OCI-LY7 (cell line): ENCODE measurements at regions of chr6 and their contacts with region 1.

Region 1: GRCh38 chr6:53244958-53245357 is 96.3 kb upstream of the GCM1 start:
- DNase-seq: peak; percentile 94
- H3K4me3 ChIP-seq: peak overlapping the region; percentile 24
- H3K27ac ChIP-seq: peak overlapping the region; percentile 61
- H3K4me1 ChIP-seq: peaks cover 40% of the 10 kb centered on the region
- CTCF ChIP-seq: no peak

Region 2: DNA sequence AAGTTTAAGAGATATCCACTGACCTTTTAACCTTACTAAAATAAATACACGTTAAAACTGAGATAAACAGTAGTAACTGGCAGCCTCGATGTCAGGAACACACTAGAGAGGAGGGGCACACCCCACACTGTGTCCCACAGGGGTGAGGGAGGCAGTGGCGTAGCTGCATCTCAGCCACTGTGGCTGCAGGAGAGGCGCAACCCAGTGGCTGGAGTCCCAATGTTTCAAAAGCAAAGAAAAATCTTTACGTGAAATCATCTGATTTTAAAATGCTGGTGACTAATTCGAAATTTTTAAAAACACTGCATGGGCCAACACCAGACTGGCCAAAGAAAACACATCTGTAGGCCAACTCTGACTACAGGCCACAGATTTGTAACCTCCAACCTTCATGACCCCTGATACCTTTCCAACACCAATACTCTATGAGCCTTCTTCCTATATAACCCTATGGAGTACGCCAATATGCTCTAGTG is 722.8 kb before region 1 on chr6:
- CTCF ChIA-PET with region 1: no interaction called
- POLR2A ChIA-PET with region 1: no interaction called
- intact Hi-C with region 1: no loop called
- DNase-seq: no peak
- H3K4me3 ChIP-seq: no peak overlapping the region
- H3K27ac ChIP-seq: no peak overlapping the region
- H3K4me1 ChIP-seq: peaks cover 31% of the 10 kb centered on the region
- CTCF ChIP-seq: no peak

Region 3: GRCh38 chr6:53189554-53189953 is 55.4 kb before region 1 on chr6:
- CTCF ChIA-PET with region 1: no interaction called
- POLR2A ChIA-PET with region 1: no interaction called
- intact Hi-C with region 1: loop called (anchors 5 kb)
- DNase-seq: no peak
- H3K4me3 ChIP-seq: no peak overlapping the region
- H3K27ac ChIP-seq: no peak overlapping the region
- H3K4me1 ChIP-seq: peaks cover 13% of the 10 kb centered on the region
- CTCF ChIP-seq: no peak

Region 4: GRCh38 chr6:53410508-53411258 is 165.7 kb after region 1 on chr6:
- CTCF ChIA-PET with region 1: no interaction called
- POLR2A ChIA-PET with region 1: no interaction called
- intact Hi-C with region 1: loop called (anchors 2 kb)
- DNase-seq: peak; percentile 80
- H3K4me3 ChIP-seq: peak overlapping the region; percentile 19
- H3K27ac ChIP-seq: peak overlapping the region; percentile 39
- H3K4me1 ChIP-seq: peaks cover 17% of the 10 kb centered on the region
- CTCF ChIP-seq: peak; percentile 99

Region 5: DNA sequence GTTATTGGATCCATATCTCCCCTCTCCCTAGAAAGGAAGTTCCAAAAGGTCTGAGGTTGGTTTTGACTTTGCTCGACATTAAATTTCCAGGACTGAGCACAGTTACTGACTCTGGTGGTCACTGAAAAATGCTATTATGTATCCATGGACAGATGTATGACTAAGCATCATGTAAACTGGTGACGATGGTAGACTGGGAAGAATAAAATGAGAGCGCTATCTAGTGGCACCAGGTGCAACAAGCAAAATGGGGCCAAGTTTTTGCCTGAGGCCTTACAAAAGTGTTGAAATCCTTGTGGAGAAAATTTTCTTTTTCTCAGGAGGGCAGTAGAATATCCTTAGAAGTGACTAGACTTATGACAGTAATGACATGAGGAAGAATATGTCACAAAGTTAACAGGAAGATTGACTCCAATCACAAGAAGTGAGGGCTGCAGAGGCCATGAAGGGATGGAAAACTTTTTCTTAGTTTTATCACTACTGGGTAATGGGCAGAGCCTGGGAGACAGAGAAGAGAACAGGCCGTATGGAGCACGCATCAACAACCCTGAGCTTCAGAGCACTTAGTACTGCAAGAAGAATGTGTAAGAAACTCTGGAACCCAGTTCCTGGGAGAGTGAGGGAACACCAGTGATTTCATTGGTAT is 192.7 kb after region 1 on chr6:
- CTCF ChIA-PET with region 1: no interaction called
- POLR2A ChIA-PET with region 1: no interaction called
- intact Hi-C with region 1: loop called (anchors 2 kb)
- DNase-seq: peak; percentile 64
- H3K4me3 ChIP-seq: no peak overlapping the region
- H3K27ac ChIP-seq: no peak overlapping the region
- H3K4me1 ChIP-seq: no peaks in the 10 kb centered on the region
- CTCF ChIP-seq: peak; percentile 95

Region 6: GRCh38 chr6:53573299-53573698 is 328.3 kb after region 1 on chr6:
- CTCF ChIA-PET with region 1: no interaction called
- POLR2A ChIA-PET with region 1: no interaction called
- intact Hi-C with region 1: no loop called
- DNase-seq: no peak
- H3K4me3 ChIP-seq: no peak overlapping the region
- H3K27ac ChIP-seq: no peak overlapping the region
- H3K4me1 ChIP-seq: no peaks in the 10 kb centered on the region
- CTCF ChIP-seq: no peak